Naive thymus-derived CD4-positive, alpha-beta T cell (primary cell): ENCODE measurements at regions of chr14 and their contacts with region 1.

Region 1: GRCh38 chr14:92106143-92106926 is at the start of gene ATXN3:
- DNase-seq: peak; percentile 75 to 97 (median 93)
- ATAC-seq: peak; percentile 95
- H3K4me3 ChIP-seq: peak within 1 kb of the TSS; percentile 82
- H3K4me3 Mint-ChIP-seq: peak within 1 kb of the TSS; percentile 88 to 100 (median 98)
- H3K27ac ChIP-seq: peak within 1 kb of the TSS; percentile 91
- H3K27ac Mint-ChIP-seq: peak within 1 kb of the TSS; percentile 82 to 96 (median 92)
- H3K4me1 ChIP-seq: peaks cover 5 to 17% of the 10 kb centered on the region in 2 donors
- H3K4me1 Mint-ChIP-seq: peaks cover 39 to 72% (median 61%) of the 10 kb centered on the region in 7 donors
- H3K27me3 ChIP-seq: no peaks in the 10 kb centered on the region
- H3K27me3 Mint-ChIP-seq: no peaks in the 10 kb centered on the region
- total RNA-seq, gene ATXN3: 27.8 to 54.9 (median 36.9) TPM

Region 2: GRCh38 chr14:91649930-91650329 is 456.4 kb before region 1 on chr14:
- CTCF ChIA-PET with region 1: no interaction called
- POLR2A ChIA-PET with region 1: interaction called, 3 read pairs
- intact Hi-C with region 1: loop called in 1 of 2 experiments (anchors 1 kb)
- DNase-seq: peak in 7 of 9 donors; percentile 5 to 59 (median 24)
- ATAC-seq: no peak
- H3K4me3 ChIP-seq: no peak overlapping the region
- H3K4me3 Mint-ChIP-seq: no peak overlapping the region
- H3K27ac ChIP-seq: no peak overlapping the region
- H3K27ac Mint-ChIP-seq: no peak overlapping the region
- H3K4me1 ChIP-seq: no peaks in the 10 kb centered on the region
- H3K4me1 Mint-ChIP-seq: peaks cover 0 to 19% (median 5%) of the 10 kb centered on the region in 7 donors
- H3K27me3 ChIP-seq: no peaks in the 10 kb centered on the region
- H3K27me3 Mint-ChIP-seq: peaks cover 0 to 6% (median 4%) of the 10 kb centered on the region in 5 donors

Region 3: GRCh38 chr14:92121670-92122350 is 15.5 kb after region 1 on chr14 and contains the starts of genes CPSF2 and NDUFB1:
- CTCF ChIA-PET with region 1: interaction called, 13 read pairs
- POLR2A ChIA-PET with region 1: interaction called, 100 read pairs
- intact Hi-C with region 1: loop called (anchors 1 kb)
- DNase-seq: peak; percentile 74 to 87 (median 85)
- ATAC-seq: peak; percentile 92
- H3K4me3 ChIP-seq: peak within 1 kb of the TSS; percentile 78
- H3K4me3 Mint-ChIP-seq: peak within 1 kb of the TSS; percentile 88 to 100 (median 99)
- H3K27ac ChIP-seq: peak within 1 kb of the TSS; percentile 92
- H3K27ac Mint-ChIP-seq: peak within 1 kb of the TSS; percentile 96 to 100 (median 100)
- H3K4me1 ChIP-seq: peaks cover 17 to 19% of the 10 kb centered on the region in 2 donors
- H3K4me1 Mint-ChIP-seq: peaks cover 27 to 72% (median 53%) of the 10 kb centered on the region in 7 donors
- H3K27me3 ChIP-seq: no peaks in the 10 kb centered on the region
- H3K27me3 Mint-ChIP-seq: no peaks in the 10 kb centered on the region
- total RNA-seq, gene CPSF2: 30.2 to 77.4 (median 60.4) TPM
- total RNA-seq, gene NDUFB1: 55.1 to 107 (median 89.7) TPM

Region 4: DNA sequence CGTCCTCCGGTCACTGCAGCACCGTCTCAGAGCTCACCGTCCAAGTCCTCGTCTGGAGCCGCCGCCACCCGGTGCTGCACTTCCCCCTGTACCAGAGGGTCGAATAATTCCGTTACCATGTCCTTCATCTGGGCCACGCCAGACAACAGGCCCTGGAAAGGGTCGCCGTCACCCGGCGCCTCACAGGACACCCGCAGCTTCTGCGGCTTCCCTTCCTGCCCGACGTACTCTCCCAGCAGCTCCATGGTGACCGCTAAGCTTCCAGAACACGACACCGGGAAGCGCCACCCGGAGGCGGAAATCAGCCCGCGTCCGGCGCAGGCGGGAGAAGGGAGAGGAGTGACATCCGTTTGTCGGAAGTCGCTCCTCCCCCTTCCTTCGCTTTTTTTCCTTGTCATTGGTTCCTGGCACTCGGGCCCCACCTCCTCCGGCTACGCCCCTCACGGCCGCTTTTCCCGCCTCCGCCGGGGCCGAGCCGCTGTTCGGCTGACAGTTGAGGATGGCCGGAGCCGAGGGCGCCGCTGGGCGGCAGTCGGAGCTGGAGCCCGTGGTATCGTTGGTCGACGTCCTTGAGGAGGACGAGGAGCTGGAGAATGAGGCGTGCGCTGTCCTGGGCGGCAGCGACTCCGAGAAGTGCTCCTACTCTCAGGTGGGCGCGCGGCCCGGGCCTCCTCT is 1100.6 kb after region 1 on chr14 and contains the starts of genes GON7 and UBR7:
- CTCF ChIA-PET with region 1: no interaction called
- POLR2A ChIA-PET with region 1: no interaction called
- intact Hi-C with region 1: loop called in 1 of 2 experiments (anchors 10 kb)
- DNase-seq: peak; percentile 66 to 91 (median 83)
- ATAC-seq: peak; percentile 99
- H3K4me3 ChIP-seq: peak within 1 kb of the TSS; percentile 81
- H3K4me3 Mint-ChIP-seq: peak within 1 kb of the TSS; percentile 75 to 99 (median 94)
- H3K27ac ChIP-seq: peak within 1 kb of the TSS; percentile 87
- H3K27ac Mint-ChIP-seq: peak within 1 kb of the TSS; percentile 88 to 97 (median 93)
- H3K4me1 ChIP-seq: peaks cover 13 to 22% of the 10 kb centered on the region in 2 donors
- H3K4me1 Mint-ChIP-seq: peaks cover 22 to 65% (median 50%) of the 10 kb centered on the region in 7 donors
- H3K27me3 ChIP-seq: no peaks in the 10 kb centered on the region
- H3K27me3 Mint-ChIP-seq: no peaks in the 10 kb centered on the region
- total RNA-seq, gene GON7: 3.5 to 17.4 (median 8.3) TPM
- total RNA-seq, gene UBR7: 10.1 to 31.3 (median 13.5) TPM